ENCODE measurements at regions of chr2 and their contacts with region 1.

Region 1: GRCh38 chr2:6922201-6922685 is 5.0 kb downstream of the RNF144A start:
- DNase-seq: no peak
- H3K4me3 ChIP-seq: no peak overlapping the region
- H3K27ac ChIP-seq: peak overlapping the region in 1 of 5 donors; percentile 63
- H3K4me1 ChIP-seq: peaks cover 49 to 74% of the 10 kb centered on the region in 2 donors
- H3K27me3 ChIP-seq: no peaks in the 10 kb centered on the region
- CTCF ChIP-seq: peak in 1 of 6 experiments; percentile 29
- POLR2A ChIP-seq: no peak

Region 2: DNA sequence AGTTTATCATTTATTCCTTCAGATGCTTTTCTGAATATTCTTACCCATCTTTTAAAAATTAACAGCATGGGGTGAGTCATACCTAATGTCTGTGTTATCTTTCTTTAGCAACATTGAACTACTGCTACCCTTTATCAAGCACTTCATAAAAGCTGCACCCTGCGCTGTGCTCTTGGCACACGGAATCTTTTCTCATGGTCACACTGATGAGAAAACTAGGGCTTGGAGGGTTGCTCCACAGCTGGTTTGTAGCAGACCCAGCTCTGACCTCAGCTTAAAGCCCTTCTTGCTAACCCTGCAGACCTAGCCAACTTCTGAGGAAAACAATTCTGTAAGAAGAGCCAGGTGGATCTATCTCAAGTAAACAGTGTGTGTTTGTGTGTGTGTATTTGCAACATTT is 101.3 kb after region 1 on chr2:
- intact Hi-C with region 1: loop called in 1 of 2 experiments (anchors 5 kb)
- DNase-seq: peak in 6 of 7 donors; percentile 80 to 91 (median 89)
- H3K4me3 ChIP-seq: no peak overlapping the region
- H3K27ac ChIP-seq: peak overlapping the region; percentile 37 to 86 (median 79)
- H3K4me1 ChIP-seq: peaks cover 34 to 82% of the 10 kb centered on the region in 2 donors
- H3K27me3 ChIP-seq: no peaks in the 10 kb centered on the region
- CTCF ChIP-seq: no peak
- POLR2A ChIP-seq: no peak

Measured in adrenal gland (tissue), 19 donors.